ENCODE measurements at regions of chr2 and their contacts with region 1.

Region 1: GRCh38 chr2:55168221-55169154 is 63.6 kb downstream of the CLHC1 start:
- DNase-seq: peak; percentile 62
- H3K4me3 Mint-ChIP-seq: no peak overlapping the region
- H3K27ac Mint-ChIP-seq: no peak overlapping the region
- H3K4me1 Mint-ChIP-seq: peaks cover 3% of the 10 kb centered on the region
- H3K27me3 Mint-ChIP-seq: no peaks in the 10 kb centered on the region

Region 2: GRCh38 chr2:55014962-55015939 is 153.2 kb before region 1 on chr2:
- CTCF ChIA-PET with region 1: interaction called, 40 read pairs
- intact Hi-C with region 1: loop called (anchors 1 kb)
- DNase-seq: peak; percentile 60
- H3K4me3 Mint-ChIP-seq: no peak overlapping the region
- H3K27ac Mint-ChIP-seq: no peak overlapping the region
- H3K4me1 Mint-ChIP-seq: peaks cover 25% of the 10 kb centered on the region
- H3K27me3 Mint-ChIP-seq: no peaks in the 10 kb centered on the region

Region 3: GRCh38 chr2:55114082-55114481 is 54.4 kb before region 1 on chr2:
- CTCF ChIA-PET with region 1: no interaction called
- intact Hi-C with region 1: no loop called
- DNase-seq: no peak
- H3K4me3 Mint-ChIP-seq: no peak overlapping the region
- H3K27ac Mint-ChIP-seq: no peak overlapping the region
- H3K4me1 Mint-ChIP-seq: no peaks in the 10 kb centered on the region
- H3K27me3 Mint-ChIP-seq: no peaks in the 10 kb centered on the region

Region 4: DNA sequence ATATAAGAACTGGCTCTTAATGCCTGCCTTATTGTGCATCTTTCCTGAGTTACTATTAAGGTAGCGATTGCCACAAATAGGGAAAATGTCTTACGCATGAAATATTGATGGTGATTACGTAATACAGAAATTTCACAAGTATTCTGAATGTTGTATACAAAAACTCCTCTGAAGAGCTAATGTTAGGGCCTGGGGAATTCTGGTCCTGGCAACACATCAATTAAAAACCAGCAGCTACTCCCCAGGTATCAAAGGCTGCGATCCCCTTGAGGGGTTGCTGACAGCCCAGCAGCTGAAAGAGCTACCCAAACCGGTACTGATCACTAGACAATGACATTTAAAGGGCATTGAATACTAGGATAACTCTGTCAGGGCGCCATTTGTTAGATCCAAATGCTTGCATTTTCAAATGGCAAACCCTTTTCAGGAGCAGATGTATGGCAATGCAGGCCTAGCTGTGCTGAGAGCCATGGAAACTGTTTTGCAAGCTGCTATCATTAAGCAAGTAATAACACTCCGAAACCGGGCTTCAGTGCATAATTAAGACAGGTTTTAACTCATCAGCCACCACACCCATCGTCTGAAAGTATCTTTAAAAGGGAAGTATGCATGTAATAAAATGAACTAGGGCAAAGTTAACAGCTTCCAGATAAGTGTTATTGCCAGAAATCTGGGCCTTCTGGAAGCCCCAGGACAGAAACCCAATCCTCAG is 14.7 kb before region 1 on chr2:
- CTCF ChIA-PET with region 1: interaction called, 12 read pairs
- intact Hi-C with region 1: no loop called
- DNase-seq: no peak
- H3K4me3 Mint-ChIP-seq: no peak overlapping the region
- H3K27ac Mint-ChIP-seq: no peak overlapping the region
- H3K4me1 Mint-ChIP-seq: peaks cover 9% of the 10 kb centered on the region
- H3K27me3 Mint-ChIP-seq: no peaks in the 10 kb centered on the region

Region 5: GRCh38 chr2:55345064-55345463 is 176.6 kb after region 1 on chr2:
- CTCF ChIA-PET with region 1: no interaction called
- intact Hi-C with region 1: no loop called
- DNase-seq: no peak
- H3K4me3 Mint-ChIP-seq: no peak overlapping the region
- H3K27ac Mint-ChIP-seq: no peak overlapping the region
- H3K4me1 Mint-ChIP-seq: no peaks in the 10 kb centered on the region
- H3K27me3 Mint-ChIP-seq: no peaks in the 10 kb centered on the region

Region 6: DNA sequence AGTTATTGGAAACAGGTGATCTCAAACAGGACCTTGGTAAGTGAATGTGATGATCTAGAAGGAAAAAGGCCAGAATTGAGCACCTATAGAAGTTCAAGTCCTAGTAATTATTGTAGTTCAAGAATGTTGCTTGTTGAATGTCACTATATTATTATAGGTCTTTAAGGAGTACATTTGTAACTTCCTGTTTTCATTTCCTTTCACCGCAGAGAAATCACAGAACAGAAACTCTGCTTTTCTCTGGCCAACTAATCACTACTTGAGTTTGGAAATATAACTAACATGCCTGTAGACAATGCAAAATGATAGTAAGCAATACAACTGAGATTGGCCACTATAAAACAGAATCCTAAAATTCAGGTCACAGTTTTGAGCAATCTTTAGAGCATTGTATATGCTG is 816.9 kb after region 1 on chr2:
- CTCF ChIA-PET with region 1: no interaction called
- intact Hi-C with region 1: no loop called
- DNase-seq: no peak
- H3K4me3 Mint-ChIP-seq: no peak overlapping the region
- H3K27ac Mint-ChIP-seq: no peak overlapping the region
- H3K4me1 Mint-ChIP-seq: no peaks in the 10 kb centered on the region
- H3K27me3 Mint-ChIP-seq: no peaks in the 10 kb centered on the region

Measured in activated naive CD4-positive, alpha-beta T cell treated with anti-CD3 and anti-CD28 coated beads for 36 hours (primary cell).